ENCODE measurements at regions of chr13 and their contacts with region 1.

Region 1: DNA sequence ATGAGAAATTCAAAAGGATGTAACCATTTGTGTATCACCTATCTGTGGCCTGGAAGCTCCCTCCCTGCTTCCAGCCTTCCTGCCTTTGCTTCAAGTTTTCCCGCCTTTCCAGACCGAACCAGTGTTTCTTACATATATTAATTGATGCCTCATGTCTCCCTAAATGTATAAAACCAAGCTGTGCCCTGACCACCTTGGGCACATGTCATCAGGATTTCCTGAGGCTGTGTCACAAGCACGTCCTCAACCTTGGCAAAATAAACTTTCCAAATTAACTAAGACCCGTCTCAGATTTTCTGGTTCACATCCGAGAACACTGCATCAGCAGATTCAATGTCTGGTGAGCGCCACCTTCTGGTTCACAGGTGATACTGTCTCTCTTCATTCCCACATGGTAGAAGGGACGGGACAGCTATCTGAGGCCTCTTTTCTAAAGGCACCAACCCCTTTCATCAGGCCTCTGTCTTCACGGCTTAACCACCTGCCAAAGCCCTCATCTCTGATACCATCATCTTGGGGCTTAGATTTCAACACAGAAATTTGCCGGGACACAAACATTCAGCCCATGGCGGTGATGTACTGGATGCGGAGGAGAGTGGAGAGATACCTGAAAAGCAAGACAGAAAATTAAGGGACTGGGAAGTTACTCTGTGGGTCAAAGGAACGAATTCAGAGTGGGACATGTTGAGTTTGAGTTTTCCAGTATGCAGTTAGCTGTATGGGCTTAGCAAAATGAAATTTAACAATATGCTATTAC is 58.7 kb upstream of the PABPC3 start:
- DNase-seq: peak; percentile 52
- H3K4me3 Mint-ChIP-seq: no peak overlapping the region
- H3K27ac Mint-ChIP-seq: no peak overlapping the region
- H3K4me1 Mint-ChIP-seq: no peaks in the 10 kb centered on the region
- H3K27me3 Mint-ChIP-seq: peaks cover 39% of the 10 kb centered on the region
- CTCF ChIP-seq: peak; percentile 71

Region 2: GRCh38 chr13:24557081-24557480 is 480.2 kb before region 1 on chr13:
- CTCF ChIA-PET with region 1: no interaction called
- intact Hi-C with region 1: no loop called
- DNase-seq: no peak
- H3K4me3 Mint-ChIP-seq: no peak overlapping the region
- H3K27ac Mint-ChIP-seq: no peak overlapping the region
- H3K4me1 Mint-ChIP-seq: no peaks in the 10 kb centered on the region
- H3K27me3 Mint-ChIP-seq: peaks cover 6% of the 10 kb centered on the region
- CTCF ChIP-seq: no peak

Region 3: DNA sequence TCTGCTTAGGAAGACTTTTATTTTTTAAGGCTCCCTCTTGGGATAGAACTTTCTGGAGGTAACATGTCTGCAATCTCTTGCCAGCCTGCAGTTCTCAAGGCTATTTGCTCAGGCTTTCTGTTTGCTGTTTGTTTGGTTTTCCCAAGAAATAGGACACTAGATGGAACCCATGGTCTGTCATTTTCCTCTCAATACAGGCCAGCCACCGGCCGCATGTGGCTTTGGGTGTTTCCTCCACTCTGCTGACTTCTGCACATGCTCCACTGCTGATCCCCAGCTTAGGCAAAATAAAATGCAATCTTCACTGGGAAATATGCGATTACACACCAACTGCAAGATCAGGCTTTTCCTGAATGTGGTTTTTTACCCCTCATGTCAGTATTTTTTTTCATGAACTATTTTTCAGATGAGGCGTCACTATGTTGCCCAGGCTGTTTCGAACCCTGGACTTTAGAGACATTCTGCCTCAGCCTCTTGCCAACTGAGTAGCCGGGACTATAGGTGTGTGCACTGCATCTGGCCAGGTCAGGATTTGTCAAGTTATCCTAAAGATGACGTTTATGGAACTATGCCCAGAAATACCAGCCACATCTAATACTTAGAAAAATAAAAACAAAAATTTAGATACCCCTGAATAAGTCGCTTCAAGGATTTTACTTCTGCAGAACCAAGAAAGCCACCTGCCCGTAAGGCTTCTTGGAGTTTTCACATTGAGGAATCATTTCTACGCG is 35.6 kb before region 1 on chr13:
- CTCF ChIA-PET with region 1: interaction called, 3 read pairs
- intact Hi-C with region 1: loop called (anchors 1 kb)
- DNase-seq: no peak
- H3K4me3 Mint-ChIP-seq: no peak overlapping the region
- H3K27ac Mint-ChIP-seq: no peak overlapping the region
- H3K4me1 Mint-ChIP-seq: no peaks in the 10 kb centered on the region
- H3K27me3 Mint-ChIP-seq: peaks cover 13% of the 10 kb centered on the region
- CTCF ChIP-seq: no peak